ENCODE measurements at regions of chr12 and their contacts with region 1.

Region 1: DNA sequence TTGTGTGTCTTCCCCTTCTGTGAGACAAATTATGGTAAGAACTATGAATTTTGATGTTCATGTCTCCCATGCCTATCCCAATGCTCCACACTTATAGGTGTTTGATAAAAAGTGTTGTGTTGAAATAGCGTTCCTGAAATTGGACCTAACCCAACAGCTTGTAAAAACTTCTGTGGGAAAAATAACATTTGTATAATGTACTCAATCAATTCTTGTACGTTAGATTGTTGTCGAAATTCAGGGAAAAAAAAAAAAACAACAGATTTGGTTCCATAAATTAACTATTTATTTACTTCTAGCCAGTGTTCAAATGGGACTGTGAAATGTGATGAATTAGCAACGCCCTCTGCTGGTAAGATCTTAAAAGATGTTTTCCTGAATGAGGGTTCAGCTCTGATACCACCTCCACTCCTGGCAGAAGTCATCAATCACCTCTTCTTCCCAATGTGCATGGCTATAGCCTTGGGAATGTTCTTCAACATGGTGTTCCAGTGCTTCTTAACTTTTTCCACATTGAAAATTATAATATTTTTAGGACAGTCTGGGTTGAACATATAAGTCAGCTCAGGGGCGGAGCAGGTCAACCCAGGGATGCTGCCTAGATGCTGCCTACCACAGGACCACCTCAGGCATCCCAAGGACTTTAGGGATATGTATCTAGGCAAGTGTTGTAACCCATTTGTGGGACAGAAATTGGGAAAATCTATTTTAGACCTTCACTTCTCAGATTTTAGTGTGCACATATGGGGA is 170.6 kb downstream of the OTOGL start:
- H3K4me3 ChIP-seq: no peak overlapping the region
- H3K27ac ChIP-seq: no peak overlapping the region
- H3K4me1 ChIP-seq: peaks cover 4% of the 10 kb centered on the region; the same call in 1 of the 2 replicates
- CTCF ChIP-seq: peak; percentile 43; the same call in 1 of the 2 replicates

Region 2: GRCh38 chr12:79776111-79776510 is 493.9 kb before region 1 on chr12:
- CTCF ChIA-PET with region 1: no interaction called
- POLR2A ChIA-PET with region 1: no interaction called
- H3K4me3 ChIP-seq: no peak overlapping the region
- H3K27ac ChIP-seq: no peak overlapping the region
- H3K4me1 ChIP-seq: no peaks in the 10 kb centered on the region
- CTCF ChIP-seq: no peak

Region 3: DNA sequence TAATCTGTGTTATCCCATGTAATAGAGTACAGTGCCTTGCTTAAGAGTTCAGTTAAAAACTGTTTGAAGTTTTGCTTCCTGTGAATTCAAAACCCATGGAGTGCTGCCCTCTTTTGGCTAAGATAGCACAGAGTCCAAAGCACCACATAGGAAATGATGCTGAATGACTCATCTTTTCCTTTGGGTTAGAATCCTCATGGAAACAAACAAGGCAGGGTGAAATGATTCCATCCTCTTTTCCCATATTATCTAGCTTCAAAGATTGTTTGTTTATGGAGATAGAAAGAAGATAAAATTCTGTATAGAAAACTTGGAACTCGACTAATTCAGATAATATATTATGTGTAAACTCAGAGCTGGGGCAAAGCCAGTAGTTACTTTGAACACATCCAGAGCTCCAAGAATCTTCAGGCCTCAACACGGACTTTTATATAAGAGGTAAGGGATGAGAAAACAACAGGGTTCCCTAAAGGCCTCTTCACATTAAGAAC is 83.2 kb before region 1 on chr12:
- CTCF ChIA-PET with region 1: interaction called, 294 read pairs
- POLR2A ChIA-PET with region 1: interaction called, 4 read pairs
- H3K4me3 ChIP-seq: no peak overlapping the region
- H3K27ac ChIP-seq: peak overlapping the region; percentile 61
- H3K4me1 ChIP-seq: peaks cover 16% of the 10 kb centered on the region
- CTCF ChIP-seq: peak; percentile 72; the same call in 1 of the 2 replicates

Region 4: DNA sequence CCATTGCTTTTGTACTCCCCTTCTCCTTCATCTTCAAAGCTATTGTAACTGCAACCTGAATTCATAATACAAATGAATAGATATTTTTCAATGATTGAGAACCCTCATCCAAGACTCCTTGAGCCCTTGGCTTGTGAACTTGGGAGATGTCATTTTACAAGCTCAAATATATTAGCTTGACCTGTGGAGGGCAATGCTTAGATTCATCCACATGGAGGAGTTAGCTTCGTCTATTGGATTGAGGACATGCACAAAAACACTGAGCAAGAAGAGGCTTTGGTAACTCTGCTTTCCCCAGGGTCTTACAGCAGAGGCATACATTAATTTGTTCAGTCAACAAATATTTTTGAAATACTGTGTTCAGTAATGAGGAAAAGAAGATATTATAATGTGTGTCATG is 69.6 kb before region 1 on chr12:
- CTCF ChIA-PET with region 1: interaction called, 294 read pairs
- POLR2A ChIA-PET with region 1: interaction called, 8 read pairs
- H3K4me3 ChIP-seq: no peak overlapping the region
- H3K27ac ChIP-seq: no peak overlapping the region
- H3K4me1 ChIP-seq: no peaks in the 10 kb centered on the region
- CTCF ChIP-seq: no peak

Region 5: DNA sequence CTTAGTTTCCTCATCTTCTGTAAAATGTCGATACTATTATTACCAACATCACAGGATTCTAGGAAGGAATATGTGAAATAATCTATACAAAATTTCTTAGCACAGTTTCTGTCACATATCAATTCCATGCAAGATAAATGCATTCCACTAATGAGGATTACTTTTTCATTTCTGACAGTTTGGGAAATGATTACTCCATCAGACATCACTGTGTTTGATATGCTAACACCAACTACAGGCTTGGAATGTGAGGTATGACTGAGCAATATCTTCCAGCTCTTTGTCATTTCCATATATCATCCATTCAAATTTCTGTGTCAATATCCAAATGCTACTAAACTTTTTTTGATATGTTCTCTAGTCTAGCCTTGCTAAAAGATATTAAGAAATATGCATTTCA is 62.8 kb after region 1 on chr12:
- CTCF ChIA-PET with region 1: no interaction called
- POLR2A ChIA-PET with region 1: no interaction called
- H3K4me3 ChIP-seq: no peak overlapping the region
- H3K27ac ChIP-seq: no peak overlapping the region
- H3K4me1 ChIP-seq: no peaks in the 10 kb centered on the region
- CTCF ChIP-seq: no peak

Measured in HEK293 (cell line).